Left cardiac atrium (tissue), 4 donors: ENCODE measurements at regions of chr15 and their contacts with region 1.

Region 1: DNA sequence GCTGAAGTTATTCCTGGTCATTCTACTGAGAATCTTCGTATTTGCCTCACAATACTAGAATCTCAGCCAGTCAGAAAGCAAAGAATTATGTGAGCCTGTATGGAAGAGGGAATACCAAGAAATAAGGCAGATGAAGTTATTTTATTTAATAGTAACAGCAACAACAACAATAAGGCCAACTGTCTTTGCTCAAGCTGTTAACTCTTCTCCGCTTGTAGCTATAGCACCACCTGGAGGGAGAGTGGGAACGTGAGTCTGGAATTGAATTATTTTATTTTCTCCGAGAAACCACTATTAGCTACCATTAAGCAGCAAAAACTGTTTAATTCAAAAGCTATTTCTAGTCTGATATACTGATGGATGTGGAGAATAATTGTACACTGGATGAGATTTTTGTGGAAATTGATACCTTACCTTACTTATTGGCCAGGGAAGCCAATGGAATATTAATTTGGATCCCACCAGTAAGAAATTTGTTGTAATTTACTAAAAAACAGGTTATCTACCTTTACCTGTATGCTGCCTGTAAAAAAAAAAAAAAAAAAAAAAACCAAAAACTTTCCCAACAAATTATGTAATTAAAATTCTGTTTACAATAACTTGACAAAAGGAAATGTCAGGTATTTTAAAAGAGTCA is 50.1 kb downstream of the CALML4 start:
- DNase-seq: no peak
- ATAC-seq: peak; percentile 57 to 67

Region 2: DNA sequence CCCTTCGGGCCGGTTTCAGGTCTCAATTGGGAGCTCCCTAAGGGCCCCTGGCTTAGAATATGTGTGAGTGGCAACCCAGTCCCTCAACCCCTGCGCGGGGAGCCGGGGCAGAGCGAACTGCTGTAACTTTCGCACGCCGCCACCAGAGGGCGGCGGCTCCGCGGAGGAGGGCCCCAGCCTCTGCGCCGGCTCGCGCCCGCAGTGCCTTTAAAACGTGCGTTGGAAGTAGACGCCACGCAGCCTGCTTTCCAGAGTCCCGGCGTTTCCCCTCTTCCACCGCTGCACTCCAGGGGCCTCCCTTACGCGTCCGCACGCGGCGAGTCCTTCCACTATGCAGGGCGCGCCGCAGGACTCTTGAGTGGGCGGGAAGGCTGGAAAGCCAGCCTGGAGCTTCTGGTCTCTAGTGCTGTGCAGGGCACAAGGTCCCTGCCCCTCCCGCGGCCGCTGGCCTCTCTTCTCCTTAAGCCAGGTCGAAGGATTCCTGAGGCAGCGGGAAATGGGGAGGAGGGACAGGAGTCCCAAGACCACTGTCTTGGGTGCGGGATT is 291.5 kb before region 1 on chr15:
- intact Hi-C with region 1: loop called (anchors 1 to 2 kb)
- DNase-seq: peak; percentile 86
- ATAC-seq: peak; percentile 96 to 98

Region 3: GRCh38 chr15:67906382-67906781 is 248.7 kb before region 1 on chr15:
- intact Hi-C with region 1: loop called in 1 of 2 experiments (anchors 5 kb)
- DNase-seq: no peak
- ATAC-seq: peak in 1 of 2 donors; percentile 32